Activated CD4-positive, alpha-beta T cell treated with anti-CD3 and anti-CD28 coated beads for 36 hours (primary cell): ENCODE measurements at regions of chr14 and their contacts with region 1.

Region 1: DNA sequence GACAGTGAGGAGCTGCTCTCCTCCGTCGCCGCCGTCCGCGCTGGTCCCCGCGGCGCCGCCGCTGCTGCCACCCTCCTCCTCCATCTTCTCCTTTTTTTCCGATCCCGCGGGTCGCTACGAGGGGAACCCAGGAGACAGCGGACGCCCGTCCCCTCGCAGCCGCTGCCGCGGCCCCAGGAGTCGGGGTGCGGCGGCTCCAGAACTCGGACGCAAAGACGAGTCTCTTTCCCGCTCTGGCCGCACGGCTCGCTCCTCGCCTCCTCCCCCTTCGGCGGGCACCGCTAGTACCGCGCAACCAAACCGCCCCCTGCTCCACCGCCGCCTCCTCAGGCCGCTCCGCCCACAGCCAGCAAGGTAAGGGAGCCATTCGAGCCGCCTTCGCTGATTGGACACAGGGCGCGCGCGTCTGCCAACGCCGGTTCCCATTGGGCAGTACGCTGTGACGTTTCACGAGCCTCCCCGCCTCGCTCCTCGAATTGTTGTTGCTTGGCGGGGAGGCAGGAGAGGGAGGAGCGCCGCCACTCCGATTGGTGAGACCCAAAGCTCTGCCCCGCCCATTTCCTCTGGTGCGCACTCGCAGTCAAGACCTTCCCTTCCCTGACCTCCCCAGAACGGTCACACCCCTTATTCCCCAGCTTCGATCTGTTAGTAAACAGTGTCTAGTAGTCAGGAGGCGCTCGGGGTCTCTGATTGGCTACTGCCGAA is at the start of gene RPS6KA5:
- DNase-seq: peak; percentile 100
- ATAC-seq: peak; percentile 87
- H3K4me3 Mint-ChIP-seq: no peak within 1 kb of the TSS
- H3K27ac Mint-ChIP-seq: peak within 1 kb of the TSS; percentile 71
- H3K4me1 Mint-ChIP-seq: peaks cover 58% of the 10 kb centered on the region
- H3K27me3 Mint-ChIP-seq: no peaks in the 10 kb centered on the region
- total RNA-seq, gene RPS6KA5: 11.9 to 13.8 TPM

Region 2: DNA sequence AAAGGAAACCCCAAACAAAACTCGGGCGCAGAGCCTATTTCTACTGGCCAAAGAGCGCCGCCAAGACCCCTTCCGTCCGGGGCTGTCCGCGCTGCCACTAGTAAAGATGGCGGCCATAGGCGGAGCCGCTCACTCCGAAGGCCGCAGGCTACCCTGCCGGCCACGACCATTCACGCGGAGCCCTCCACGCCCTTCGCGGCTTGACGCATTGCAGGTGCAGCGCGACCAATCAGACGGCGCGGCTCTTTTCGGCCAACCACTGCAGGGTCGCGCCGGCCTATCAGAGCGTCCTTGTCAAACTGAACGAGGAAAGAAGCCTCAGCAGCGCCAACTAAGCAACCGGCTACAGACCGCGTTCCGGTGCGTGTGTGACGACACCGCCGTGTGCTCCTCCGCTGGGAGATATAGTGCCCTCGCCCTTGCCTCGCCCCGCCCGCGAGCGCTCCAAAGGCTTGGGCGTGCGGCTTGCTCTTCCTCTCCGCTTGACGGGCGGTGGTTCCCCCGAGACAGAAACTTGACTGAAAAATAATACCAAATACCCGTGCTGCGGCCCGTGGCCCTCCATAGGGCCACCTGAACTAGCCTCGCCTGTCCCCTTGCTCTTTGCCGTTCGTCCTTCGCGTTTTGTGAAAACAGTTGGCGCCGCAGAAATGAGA is 677.3 kb before region 1 on chr14:
- CTCF ChIA-PET with region 1: no interaction called
- POLR2A ChIA-PET with region 1: no interaction called
- intact Hi-C with region 1: loop called in 1 of 2 experiments (anchors 1 kb)
- DNase-seq: peak; percentile 99
- ATAC-seq: peak; percentile 89
- H3K4me3 Mint-ChIP-seq: no peak overlapping the region
- H3K27ac Mint-ChIP-seq: no peak overlapping the region
- H3K4me1 Mint-ChIP-seq: peaks cover 27% of the 10 kb centered on the region
- H3K27me3 Mint-ChIP-seq: no peaks in the 10 kb centered on the region

Region 3: GRCh38 chr14:90970167-90970600 is 90.3 kb before region 1 on chr14:
- CTCF ChIA-PET with region 1: interaction called, 3 read pairs
- POLR2A ChIA-PET with region 1: interaction called, 3 read pairs
- intact Hi-C with region 1: loop called (anchors 1 kb)
- DNase-seq: no peak
- ATAC-seq: peak; percentile 91
- H3K4me3 Mint-ChIP-seq: peak overlapping the region; percentile 59
- H3K27ac Mint-ChIP-seq: peak overlapping the region; percentile 95
- H3K4me1 Mint-ChIP-seq: peaks cover 48% of the 10 kb centered on the region
- H3K27me3 Mint-ChIP-seq: no peaks in the 10 kb centered on the region

Region 4: GRCh38 chr14:91114079-91115065 is 53.9 kb after region 1 on chr14:
- CTCF ChIA-PET with region 1: interaction called, 9 read pairs
- POLR2A ChIA-PET with region 1: interaction called, 29 read pairs
- intact Hi-C with region 1: loop called (anchors 1 kb)
- DNase-seq: peak; percentile 82
- ATAC-seq: peak; percentile 82
- H3K4me3 Mint-ChIP-seq: peak overlapping the region; percentile 99
- H3K27ac Mint-ChIP-seq: peak overlapping the region; percentile 99
- H3K4me1 Mint-ChIP-seq: peaks cover 70% of the 10 kb centered on the region
- H3K27me3 Mint-ChIP-seq: no peaks in the 10 kb centered on the region

Region 5: GRCh38 chr14:91249841-91250616 is 189.5 kb after region 1 on chr14:
- CTCF ChIA-PET with region 1: no interaction called
- POLR2A ChIA-PET with region 1: no interaction called
- intact Hi-C with region 1: loop called (anchors 2 to 5 kb)
- DNase-seq: peak; percentile 55
- ATAC-seq: no peak
- H3K4me3 Mint-ChIP-seq: peak overlapping the region; percentile 21
- H3K27ac Mint-ChIP-seq: peak overlapping the region; percentile 84
- H3K4me1 Mint-ChIP-seq: peaks cover 87% of the 10 kb centered on the region
- H3K27me3 Mint-ChIP-seq: no peaks in the 10 kb centered on the region

Region 6: GRCh38 chr14:91482263-91483013 is 421.9 kb after region 1 on chr14:
- CTCF ChIA-PET with region 1: no interaction called
- POLR2A ChIA-PET with region 1: no interaction called
- intact Hi-C with region 1: no loop called
- DNase-seq: no peak
- ATAC-seq: no peak
- H3K4me3 Mint-ChIP-seq: no peak overlapping the region
- H3K27ac Mint-ChIP-seq: no peak overlapping the region
- H3K4me1 Mint-ChIP-seq: peaks cover 54% of the 10 kb centered on the region
- H3K27me3 Mint-ChIP-seq: no peaks in the 10 kb centered on the region

Region 7: DNA sequence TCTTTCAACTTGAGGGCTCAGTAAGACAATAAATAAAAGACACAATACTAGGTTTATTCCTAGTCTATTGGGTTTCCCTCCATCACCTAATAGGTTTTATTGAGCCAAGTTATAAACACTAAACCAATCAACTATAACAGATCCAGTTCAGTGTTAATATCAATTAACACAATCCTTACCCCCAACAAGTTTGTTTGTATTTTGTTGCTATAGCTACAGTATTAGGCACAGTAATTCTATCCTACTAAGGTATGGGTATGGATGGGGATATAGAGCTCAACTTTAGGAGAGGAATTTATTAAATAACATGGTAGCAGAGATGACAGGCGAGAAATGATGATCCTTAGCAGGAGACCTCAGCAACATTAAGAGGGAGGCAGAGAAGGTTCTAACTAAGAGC is 436.3 kb after region 1 on chr14:
- CTCF ChIA-PET with region 1: no interaction called
- POLR2A ChIA-PET with region 1: no interaction called
- intact Hi-C with region 1: no loop called
- DNase-seq: no peak
- ATAC-seq: no peak
- H3K4me3 Mint-ChIP-seq: no peak overlapping the region
- H3K27ac Mint-ChIP-seq: peak overlapping the region; percentile 82
- H3K4me1 Mint-ChIP-seq: peaks cover 79% of the 10 kb centered on the region
- H3K27me3 Mint-ChIP-seq: no peaks in the 10 kb centered on the region

Region 8: GRCh38 chr14:91510174-91511042 is 449.9 kb after region 1 on chr14 and contains the start of gene PPP4R3A:
- CTCF ChIA-PET with region 1: no interaction called
- POLR2A ChIA-PET with region 1: no interaction called
- intact Hi-C with region 1: loop called in 1 of 2 experiments (anchors 2 kb)
- DNase-seq: peak; percentile 97
- ATAC-seq: peak; percentile 88
- H3K4me3 Mint-ChIP-seq: peak within 1 kb of the TSS; percentile 96
- H3K27ac Mint-ChIP-seq: peak within 1 kb of the TSS; percentile 100
- H3K4me1 Mint-ChIP-seq: peaks cover 20% of the 10 kb centered on the region
- H3K27me3 Mint-ChIP-seq: no peaks in the 10 kb centered on the region
- total RNA-seq, gene PPP4R3A: 105 to 122 TPM